Psoas muscle (tissue), 8 donors: ENCODE measurements at regions of chr2 and their contacts with region 1.

Region 1: DNA sequence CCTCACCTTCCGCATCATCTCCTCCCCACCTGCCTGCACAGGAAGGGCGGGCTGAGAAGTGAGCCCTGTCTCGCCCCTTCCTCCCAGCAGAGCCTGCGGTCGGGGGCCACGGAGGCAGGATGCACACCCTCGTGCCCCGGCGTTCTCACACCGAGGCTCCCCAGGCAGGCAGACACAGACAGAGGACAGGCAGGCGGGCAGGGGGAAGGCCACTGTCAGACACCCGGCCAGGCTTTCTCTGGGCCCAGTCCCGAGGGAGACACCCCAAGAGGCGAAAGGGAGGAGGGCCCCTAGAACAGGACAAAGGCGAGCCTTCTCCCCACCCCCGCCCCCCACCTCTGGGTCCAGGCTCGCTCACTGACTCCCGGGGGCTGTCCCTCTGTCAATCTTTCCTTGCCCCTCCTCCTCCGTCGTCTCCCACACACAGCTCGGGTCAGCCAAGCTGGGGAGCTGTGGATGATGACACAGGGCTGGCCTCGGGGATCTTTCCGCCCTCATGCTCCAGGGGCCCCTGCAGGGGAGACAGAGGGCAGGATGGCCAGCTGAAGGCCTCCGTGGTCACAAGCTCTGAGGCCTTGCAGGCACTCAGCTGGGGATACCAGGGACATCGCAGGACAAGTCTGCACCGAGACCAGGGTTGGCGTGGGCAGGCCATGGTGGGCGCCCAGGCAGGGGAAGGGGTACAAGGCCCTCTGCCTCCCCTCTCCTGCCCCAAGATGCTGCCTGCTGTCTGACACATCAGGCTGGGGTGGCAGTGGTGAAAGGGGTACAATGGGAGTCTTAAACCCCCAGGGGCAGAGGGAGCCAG is 24.9 kb downstream of the BIN1 start:
- DNase-seq: peak; percentile 77 to 88
- ATAC-seq: peak in 3 of 4 donors; percentile 20 to 34 (median 21)
- H3K4me3 ChIP-seq: peak overlapping the region; percentile 54
- H3K27ac ChIP-seq: peak overlapping the region; percentile 98
- H3K4me1 ChIP-seq: peaks cover 96% of the 10 kb centered on the region
- H3K27me3 ChIP-seq: no peaks in the 10 kb centered on the region
- CTCF ChIP-seq: no peak

Region 2: DNA sequence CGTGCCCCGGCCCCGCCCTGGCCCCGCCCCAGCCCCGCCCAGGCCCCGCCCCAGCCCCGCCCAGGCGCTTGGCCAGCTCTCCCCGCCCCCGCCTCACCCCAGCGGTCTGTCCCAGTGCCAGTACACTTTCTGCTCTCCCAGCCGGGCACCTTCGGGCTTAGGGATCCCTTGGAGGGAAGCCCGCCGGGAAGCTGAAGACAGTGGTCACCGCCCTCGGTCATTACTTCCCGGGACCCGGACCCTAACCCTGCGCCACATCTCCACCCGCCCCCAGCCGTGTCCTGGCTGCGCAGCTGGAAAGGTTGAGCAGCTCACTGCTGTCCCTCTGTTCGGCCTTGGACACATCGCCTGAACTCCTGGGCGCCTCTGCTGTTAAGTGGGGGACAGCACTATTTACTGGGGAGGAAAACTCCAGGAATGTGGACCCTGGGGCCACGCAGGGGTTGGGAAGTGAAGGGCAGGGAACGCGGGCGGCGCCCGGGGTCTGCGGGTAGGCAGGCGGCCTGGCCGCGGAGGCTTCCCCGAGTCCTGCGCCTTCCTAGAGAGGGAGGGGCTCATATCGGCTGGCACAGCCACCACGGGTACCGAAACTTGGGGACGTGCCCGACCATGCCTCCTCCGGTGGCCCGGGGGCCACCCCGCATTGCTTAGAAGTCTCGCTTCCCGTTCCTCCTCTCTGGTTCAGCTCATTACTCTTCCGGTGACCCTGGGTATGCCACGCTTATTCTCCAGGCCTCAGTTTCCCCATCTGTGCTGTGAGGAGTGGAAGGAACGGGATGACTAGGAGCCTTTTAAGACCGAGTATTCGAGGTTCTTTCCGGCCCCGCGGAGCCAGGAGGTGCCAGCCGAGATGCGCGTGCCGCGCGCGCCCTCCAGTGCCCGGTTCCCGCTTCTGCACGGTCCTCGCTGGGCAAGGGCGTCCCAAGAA is 305.1 kb before region 1 on chr2:
- intact Hi-C with region 1: no loop called
- DNase-seq: peak; percentile 84 to 90
- ATAC-seq: peak; percentile 92 to 97 (median 94)
- H3K4me3 ChIP-seq: peak overlapping the region; percentile 78
- H3K27ac ChIP-seq: peak overlapping the region; percentile 47
- H3K4me1 ChIP-seq: no peaks in the 10 kb centered on the region
- H3K27me3 ChIP-seq: peaks cover 0 to 3% (median 0%) of the 10 kb centered on the region in 3 donors
- CTCF ChIP-seq: peak; percentile 96

Region 3: DNA sequence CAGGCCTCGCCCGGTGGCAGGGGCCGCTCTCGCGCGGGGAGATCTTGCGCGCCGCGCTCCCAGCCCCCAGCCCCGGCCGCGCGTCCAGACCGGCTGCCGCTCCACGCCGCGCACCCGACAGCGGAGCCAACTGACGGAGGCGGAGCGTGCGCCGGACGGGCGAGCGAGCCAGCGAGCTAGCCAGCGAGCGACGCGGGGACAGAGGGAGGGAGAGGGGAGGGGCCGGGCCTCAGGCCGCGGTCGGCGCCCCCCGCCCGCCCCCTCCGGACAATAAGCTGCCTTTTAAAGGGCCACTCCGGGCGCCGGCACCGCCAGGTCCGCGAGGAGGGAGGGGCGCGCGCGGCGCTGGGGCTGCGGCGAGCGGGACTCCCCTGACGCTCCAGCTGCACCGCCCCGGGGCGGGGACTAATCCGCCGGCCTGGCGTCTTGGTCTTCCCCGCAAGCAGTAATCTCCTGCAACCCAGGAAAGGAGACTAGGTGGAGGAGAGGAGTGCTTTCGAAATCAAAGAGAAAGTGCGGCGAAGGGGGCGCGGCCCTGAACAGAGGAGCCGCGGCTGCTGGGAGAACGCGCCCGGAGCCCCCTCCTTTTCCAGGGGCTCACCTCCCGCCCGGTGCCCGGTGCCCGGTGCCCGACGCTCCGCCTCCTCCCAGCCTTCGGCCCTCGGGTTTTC is 25.1 kb after region 1 on chr2 and contains the start of gene BIN1:
- intact Hi-C with region 1: no loop called
- DNase-seq: peak; percentile 96
- ATAC-seq: peak; percentile 68 to 74 (median 72)
- H3K4me3 ChIP-seq: peak within 1 kb of the TSS; percentile 96
- H3K27ac ChIP-seq: peak within 1 kb of the TSS; percentile 98
- H3K4me1 ChIP-seq: peaks cover 23% of the 10 kb centered on the region
- H3K27me3 ChIP-seq: no peaks in the 10 kb centered on the region
- CTCF ChIP-seq: no peak
- total RNA-seq, gene BIN1: 1,036 to 1,643 (median 1,260) TPM

Region 4: GRCh38 chr2:127128445-127128904 is 46.4 kb after region 1 on chr2:
- intact Hi-C with region 1: no loop called
- DNase-seq: no peak
- ATAC-seq: peak in 1 of 4 donors; percentile 44
- H3K4me3 ChIP-seq: no peak overlapping the region
- H3K27ac ChIP-seq: no peak overlapping the region
- H3K4me1 ChIP-seq: no peaks in the 10 kb centered on the region
- H3K27me3 ChIP-seq: no peaks in the 10 kb centered on the region
- CTCF ChIP-seq: no peak

Region 5: DNA sequence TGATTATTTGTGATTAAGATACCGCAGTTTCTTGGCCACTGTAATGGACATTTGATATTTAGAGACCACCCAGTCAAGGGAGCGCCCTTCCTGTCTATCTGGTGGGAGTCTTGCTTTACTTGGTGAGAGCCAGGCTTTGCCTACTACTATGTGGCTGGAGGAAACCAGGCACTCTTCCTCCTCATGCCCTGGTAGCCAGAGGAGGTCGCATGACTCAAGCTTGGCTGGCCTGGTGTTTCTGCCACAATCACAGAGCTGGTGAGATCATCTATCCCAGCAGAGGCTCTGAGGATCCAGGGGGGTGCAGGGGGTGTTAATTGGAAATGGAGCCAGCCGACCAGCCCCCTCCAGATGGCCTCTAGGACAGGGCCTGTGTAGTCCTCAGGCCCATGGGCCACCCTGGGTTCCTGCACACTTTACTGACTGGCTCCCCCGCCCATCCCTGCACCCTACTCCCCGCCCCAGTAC is 71.7 kb after region 1 on chr2:
- intact Hi-C with region 1: loop called (anchors 5 kb)
- DNase-seq: peak; percentile 68 to 86
- ATAC-seq: peak; percentile 75 to 86 (median 84)
- H3K4me3 ChIP-seq: no peak overlapping the region
- H3K27ac ChIP-seq: peak overlapping the region; percentile 89
- H3K4me1 ChIP-seq: peaks cover 33% of the 10 kb centered on the region
- H3K27me3 ChIP-seq: no peaks in the 10 kb centered on the region
- CTCF ChIP-seq: no peak

Region 6: DNA sequence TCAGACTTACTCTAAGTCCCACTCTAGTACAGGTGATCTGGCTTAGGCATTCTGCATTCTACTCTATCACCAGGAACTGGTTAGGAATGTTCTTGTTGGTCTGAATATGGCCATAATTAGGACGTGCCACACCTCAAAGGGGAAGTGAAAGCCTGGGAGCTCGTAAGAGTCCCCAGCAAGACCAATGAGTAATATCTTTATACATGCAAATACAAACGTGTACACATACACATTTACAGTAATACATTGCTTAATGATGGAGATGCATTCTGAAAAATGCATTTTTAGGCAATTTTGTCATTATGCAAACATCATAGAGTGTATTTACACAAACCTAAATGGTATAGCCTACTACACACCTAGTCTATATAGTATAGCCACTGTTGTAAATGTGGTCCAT is 231.4 kb after region 1 on chr2:
- intact Hi-C with region 1: no loop called
- DNase-seq: no peak
- ATAC-seq: peak in 1 of 4 donors; percentile 22
- H3K4me3 ChIP-seq: no peak overlapping the region
- H3K27ac ChIP-seq: no peak overlapping the region
- H3K4me1 ChIP-seq: no peaks in the 10 kb centered on the region
- H3K27me3 ChIP-seq: no peaks in the 10 kb centered on the region
- CTCF ChIP-seq: no peak